Activated T-helper 2 cell treated with anti-CD3 and anti-CD28 coated beads, Interferon-gamma antibody, Interleukin-2, Interleukin-4, amounts not matched to agents 10 μg/mL and 5 μg/mL and 100 μg/mL, durations not matched to agents 14 hours and 24 hours and 36 hours (primary cell): ENCODE measurements at regions of chr4 and their contacts with region 1.

Region 1: DNA sequence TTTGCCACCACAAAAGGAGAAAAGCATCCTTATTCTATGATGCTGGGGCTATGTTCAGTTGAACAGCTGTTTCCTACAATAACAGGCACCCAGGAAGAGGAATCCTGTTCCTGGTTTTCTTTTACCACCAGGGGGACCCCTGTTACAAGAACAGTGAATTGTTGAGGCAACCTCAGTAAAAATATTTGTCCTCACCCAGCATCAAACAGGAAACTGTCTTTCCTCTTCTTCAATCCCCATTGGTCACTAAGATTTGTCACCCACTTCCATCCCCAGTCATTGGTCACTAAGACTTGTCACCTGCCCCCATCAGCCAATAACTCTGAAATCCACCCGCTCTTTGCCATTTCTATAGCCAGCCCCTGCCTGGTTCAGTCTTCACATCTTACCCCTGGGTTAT is 143.5 kb upstream of the GALNT7 start:
- DNase-seq: no peak
- H3K4me3 Mint-ChIP-seq: no peak overlapping the region
- H3K27ac Mint-ChIP-seq: no peak overlapping the region
- H3K4me1 Mint-ChIP-seq: peaks cover 5% of the 10 kb centered on the region
- H3K27me3 Mint-ChIP-seq: peaks cover 4% of the 10 kb centered on the region

Region 2: DNA sequence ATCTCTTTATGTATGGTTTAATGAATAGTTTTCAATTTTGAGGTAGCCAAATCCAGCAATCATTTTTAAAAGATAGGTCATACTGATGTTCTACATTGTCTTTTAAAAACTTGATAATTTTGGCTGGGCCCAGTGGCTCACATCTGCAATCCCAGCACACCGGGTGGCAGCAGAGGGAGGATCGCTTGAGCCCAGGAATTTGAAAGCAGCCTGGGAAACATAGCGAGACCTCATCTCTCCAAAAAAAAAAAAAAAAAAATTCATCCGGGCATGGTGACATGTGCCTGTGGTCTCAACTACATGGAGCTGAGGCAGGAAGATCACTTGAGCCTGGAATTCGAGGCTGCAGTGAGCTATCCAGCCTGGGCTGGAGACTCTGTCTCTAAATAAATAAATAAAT is 792.2 kb before region 1 on chr4:
- intact Hi-C with region 1: no loop called
- DNase-seq: no peak
- H3K4me3 Mint-ChIP-seq: no peak overlapping the region
- H3K27ac Mint-ChIP-seq: no peak overlapping the region
- H3K4me1 Mint-ChIP-seq: no peaks in the 10 kb centered on the region
- H3K27me3 Mint-ChIP-seq: no peaks in the 10 kb centered on the region

Region 3: GRCh38 chr4:173257732-173258717 is 232.9 kb after region 1 on chr4:
- intact Hi-C with region 1: loop called (anchors 2 kb)
- DNase-seq: peak; percentile 29
- H3K4me3 Mint-ChIP-seq: no peak overlapping the region
- H3K27ac Mint-ChIP-seq: no peak overlapping the region
- H3K4me1 Mint-ChIP-seq: peaks cover 2% of the 10 kb centered on the region
- H3K27me3 Mint-ChIP-seq: no peaks in the 10 kb centered on the region

Region 4: DNA sequence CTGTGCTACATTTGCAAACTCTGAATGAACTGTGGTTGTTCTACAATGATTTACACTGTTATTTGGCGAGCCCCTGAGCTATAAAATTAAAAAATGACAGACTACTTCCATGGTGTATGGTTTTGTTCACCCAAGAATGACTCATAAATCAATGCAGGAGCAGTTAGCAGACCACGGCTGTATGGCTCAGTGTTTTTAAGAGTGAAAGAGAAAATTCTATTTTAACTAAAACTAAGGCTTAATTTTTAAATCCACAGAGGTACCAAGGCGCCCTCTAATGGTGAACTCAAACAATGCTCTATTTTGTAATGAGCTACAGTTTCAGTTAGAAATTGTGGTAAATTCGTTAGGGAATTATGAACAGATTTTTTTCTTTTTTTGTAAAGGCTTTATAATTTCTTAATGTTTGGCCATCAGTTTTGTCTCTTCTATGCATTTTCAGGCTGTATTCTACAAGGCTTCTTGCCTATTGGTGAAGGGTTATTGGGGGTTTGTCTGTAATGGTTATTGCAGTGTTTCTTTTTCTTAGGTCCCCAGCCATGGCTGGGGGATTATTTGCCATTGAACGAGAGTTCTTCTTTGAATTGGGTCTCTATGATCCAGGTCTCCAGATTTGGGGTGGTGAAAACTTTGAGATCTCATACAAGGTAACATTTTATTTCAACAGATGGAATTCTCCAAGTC is 276.5 kb after region 1 on chr4:
- intact Hi-C with region 1: loop called (anchors 2 kb)
- DNase-seq: no peak
- H3K4me3 Mint-ChIP-seq: no peak overlapping the region
- H3K27ac Mint-ChIP-seq: no peak overlapping the region
- H3K4me1 Mint-ChIP-seq: peaks cover 4% of the 10 kb centered on the region
- H3K27me3 Mint-ChIP-seq: no peaks in the 10 kb centered on the region